H1 (cell line): ENCODE measurements at regions of chr15 and their contacts with region 1.

Region 1: GRCh38 chr15:65275728-65276126 is 11.0 kb downstream of the PARP16 start:
- DNase-seq: no peak
- H3K4me3 ChIP-seq: no peak overlapping the region
- H3K27ac ChIP-seq: no peak overlapping the region
- H3K4me1 ChIP-seq: peaks cover 0 to under 1% (median 0%) of the 10 kb centered on the region in 4 experiments; a peak in 1 of 7 replicates
- H3K27me3 ChIP-seq: no peaks in the 10 kb centered on the region; a peak in 1 of 7 replicates
- CTCF ChIP-seq: no peak
- EP300 ChIP-seq: no peak
- POLR2A ChIP-seq: no peak
- RAD21 ChIP-seq: no peak

Region 2: GRCh38 chr15:65201905-65202304 is 73.8 kb before region 1 on chr15:
- CTCF ChIA-PET with region 1: interaction called, 87 read pairs
- POLR2A ChIA-PET with region 1: no interaction called
- DNase-seq: no peak
- H3K4me3 ChIP-seq: no peak overlapping the region
- H3K27ac ChIP-seq: no peak overlapping the region
- H3K4me1 ChIP-seq: no peaks in the 10 kb centered on the region
- H3K27me3 ChIP-seq: no peaks in the 10 kb centered on the region
- CTCF ChIP-seq: no peak
- EP300 ChIP-seq: no peak
- POLR2A ChIP-seq: no peak
- RAD21 ChIP-seq: no peak

Region 3: DNA sequence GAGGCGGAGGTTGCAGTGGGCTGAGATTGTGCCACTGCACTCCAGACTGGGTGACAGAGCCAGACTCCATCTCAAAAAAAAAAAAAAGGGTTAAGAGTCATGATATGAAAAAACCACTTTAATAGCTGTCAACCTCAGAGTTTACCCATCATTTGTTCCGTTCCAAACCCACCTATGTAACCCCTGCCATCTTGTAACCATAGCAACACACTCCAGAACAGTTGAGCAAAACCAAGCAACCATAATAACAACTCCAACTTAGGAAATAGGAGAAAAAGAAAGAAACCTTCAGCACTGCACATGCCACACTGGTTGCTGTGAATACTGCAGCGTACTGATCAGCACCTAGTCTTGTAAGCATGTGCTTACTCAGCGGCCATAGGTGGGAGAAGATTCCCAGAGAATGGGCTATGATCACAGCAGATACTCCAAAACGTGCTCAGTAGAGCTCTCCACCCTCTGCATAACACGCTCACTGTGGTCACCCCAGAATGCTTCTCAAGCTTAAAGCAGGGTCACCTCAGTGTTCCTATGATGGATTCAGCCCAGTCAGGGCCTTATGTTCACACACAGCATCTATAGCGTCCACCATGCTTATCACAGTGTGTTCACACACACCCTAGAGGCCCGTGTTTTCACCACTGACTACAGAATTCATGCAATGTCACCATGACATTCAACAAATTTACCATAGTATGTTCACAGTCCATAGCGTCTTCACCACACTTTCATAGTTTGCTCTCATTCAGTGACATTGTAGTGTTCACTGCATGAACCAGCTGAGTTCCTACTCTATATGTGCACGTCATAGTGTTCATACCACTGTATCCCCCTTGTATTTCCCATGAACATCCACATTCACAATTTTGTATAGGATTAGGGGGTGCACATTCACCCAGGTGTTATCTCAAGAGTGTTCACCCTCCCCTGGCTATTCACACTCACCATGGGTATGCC is 57.9 kb before region 1 on chr15:
- CTCF ChIA-PET with region 1: interaction called, 87 read pairs
- POLR2A ChIA-PET with region 1: interaction called, 3 read pairs
- DNase-seq: no peak
- H3K4me3 ChIP-seq: no peak overlapping the region
- H3K27ac ChIP-seq: no peak overlapping the region
- H3K4me1 ChIP-seq: no peaks in the 10 kb centered on the region
- H3K27me3 ChIP-seq: no peaks in the 10 kb centered on the region
- CTCF ChIP-seq: no peak
- EP300 ChIP-seq: no peak
- POLR2A ChIP-seq: no peak
- RAD21 ChIP-seq: no peak

Region 4: GRCh38 chr15:65245096-65245856 is 30.5 kb before region 1 on chr15:
- CTCF ChIA-PET with region 1: interaction called, 21 read pairs
- POLR2A ChIA-PET with region 1: no interaction called
- DNase-seq: no peak
- H3K4me3 ChIP-seq: no peak overlapping the region
- H3K27ac ChIP-seq: no peak overlapping the region
- H3K4me1 ChIP-seq: peaks cover 0 to 4% (median 2%) of the 10 kb centered on the region in 4 experiments; a peak in 4 of 7 replicates
- H3K27me3 ChIP-seq: no peaks in the 10 kb centered on the region; a peak in 1 of 7 replicates
- CTCF ChIP-seq: no peak
- EP300 ChIP-seq: no peak
- POLR2A ChIP-seq: no peak
- RAD21 ChIP-seq: no peak

Region 5: GRCh38 chr15:65264863-65265430 is 10.8 kb before region 1 on chr15:
- CTCF ChIA-PET with region 1: interaction called, 114 read pairs
- POLR2A ChIA-PET with region 1: interaction called, 4 read pairs
- DNase-seq: no peak
- H3K4me3 ChIP-seq: no peak overlapping the region
- H3K27ac ChIP-seq: no peak overlapping the region
- H3K4me1 ChIP-seq: peaks cover 3 to 10% (median 4%) of the 10 kb centered on the region in 4 experiments; a peak in 5 of 7 replicates
- H3K27me3 ChIP-seq: no peaks in the 10 kb centered on the region
- CTCF ChIP-seq: no peak
- EP300 ChIP-seq: no peak
- POLR2A ChIP-seq: no peak
- RAD21 ChIP-seq: no peak

Region 6: GRCh38 chr15:65298731-65299130 is 23.0 kb after region 1 on chr15:
- CTCF ChIA-PET with region 1: interaction called, 13 read pairs
- POLR2A ChIA-PET with region 1: interaction called, 11 read pairs
- DNase-seq: no peak
- H3K4me3 ChIP-seq: no peak overlapping the region
- H3K27ac ChIP-seq: no peak overlapping the region
- H3K4me1 ChIP-seq: peaks cover 0 to 4% (median under 1%) of the 10 kb centered on the region in 4 experiments; a peak in 1 of 7 replicates
- H3K27me3 ChIP-seq: no peaks in the 10 kb centered on the region
- CTCF ChIP-seq: no peak
- EP300 ChIP-seq: no peak
- POLR2A ChIP-seq: no peak
- RAD21 ChIP-seq: no peak

Region 7: GRCh38 chr15:65476903-65477302 is 201.2 kb after region 1 on chr15:
- CTCF ChIA-PET with region 1: no interaction called
- POLR2A ChIA-PET with region 1: no interaction called
- DNase-seq: no peak
- H3K4me3 ChIP-seq: no peak overlapping the region
- H3K27ac ChIP-seq: no peak overlapping the region
- H3K4me1 ChIP-seq: no peaks in the 10 kb centered on the region
- H3K27me3 ChIP-seq: no peaks in the 10 kb centered on the region
- CTCF ChIP-seq: no peak
- EP300 ChIP-seq: no peak
- POLR2A ChIP-seq: no peak
- RAD21 ChIP-seq: no peak